Astrocyte of the cerebellum (primary cell): ENCODE measurements at regions of chr19 and their contacts with region 1.

Region 1: DNA sequence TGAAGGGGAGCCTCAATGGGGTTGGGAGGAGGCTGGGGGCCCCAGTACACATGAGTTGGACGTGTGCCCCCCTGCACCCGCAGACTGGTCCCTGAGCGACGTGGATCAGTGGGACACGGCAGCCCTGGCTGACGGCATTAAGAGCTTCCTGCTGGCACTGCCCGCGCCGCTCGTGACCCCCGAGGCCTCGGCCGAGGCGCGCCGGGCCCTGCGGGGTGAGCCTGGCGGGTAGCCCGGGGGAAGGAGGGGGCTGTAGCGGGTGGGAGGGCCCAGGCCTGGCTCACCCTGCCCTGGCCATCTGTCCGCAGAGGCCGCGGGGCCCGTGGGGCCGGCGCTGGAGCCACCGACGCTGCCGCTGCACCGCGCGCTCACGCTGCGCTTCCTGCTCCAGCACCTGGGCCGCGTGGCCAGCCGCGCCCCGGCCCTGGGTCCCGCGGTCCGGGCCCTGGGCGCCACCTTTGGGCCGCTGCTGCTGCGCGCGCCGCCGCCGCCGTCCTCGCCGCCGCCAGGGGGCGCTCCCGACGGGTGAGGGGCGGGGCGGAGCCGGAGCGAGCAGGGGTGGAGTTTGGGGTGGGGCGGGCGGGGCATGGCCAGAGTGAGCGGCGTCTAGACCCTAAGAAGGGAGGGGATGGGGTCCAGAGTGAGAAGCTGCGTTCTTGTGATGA is 8.1 kb downstream of the PIK3R2 start:
- DNase-seq: no peak
- H3K4me3 ChIP-seq: peak overlapping the region; percentile 19
- CTCF ChIP-seq: peak; percentile 21

Region 2: GRCh38 chr19:17950310-17951156 is 210.6 kb before region 1 on chr19:
- in situ Hi-C with region 1: loop called (anchors 10 kb)
- DNase-seq: no peak
- H3K4me3 ChIP-seq: no peak overlapping the region
- CTCF ChIP-seq: no peak

Region 3: GRCh38 chr19:18097217-18097992 is 63.7 kb before region 1 on chr19 and contains the start of gene MAST3:
- in situ Hi-C with region 1: no loop called
- DNase-seq: no peak
- H3K4me3 ChIP-seq: peak within 1 kb of the TSS; percentile 33
- CTCF ChIP-seq: no peak

Region 4: GRCh38 chr19:18233224-18233825 is 72.2 kb after region 1 on chr19:
- in situ Hi-C with region 1: loop called (anchors 5 kb)
- DNase-seq: no peak
- H3K4me3 ChIP-seq: no peak overlapping the region
- CTCF ChIP-seq: no peak